ENCODE measurements at regions of chr7 and their contacts with region 1.

Region 1: GRCh38 chr7:143345428-143345900 is 17.0 kb downstream of the FAM131B start:
- DNase-seq: peak; percentile 82
- ATAC-seq: peak; percentile 100
- H3K4me3 Mint-ChIP-seq: peak overlapping the region; percentile 65
- H3K27ac Mint-ChIP-seq: no peak overlapping the region
- H3K4me1 Mint-ChIP-seq: peaks cover 7% of the 10 kb centered on the region
- H3K27me3 Mint-ChIP-seq: no peaks in the 10 kb centered on the region
- CTCF ChIP-seq: peak; percentile 67

Region 2: GRCh38 chr7:143299840-143300239 is 45.6 kb before region 1 on chr7:
- CTCF ChIA-PET with region 1: interaction called, 10 read pairs
- POLR2A ChIA-PET with region 1: no interaction called
- intact Hi-C with region 1: no loop called
- DNase-seq: peak; percentile 67
- ATAC-seq: peak; percentile 90
- H3K4me3 Mint-ChIP-seq: no peak overlapping the region
- H3K27ac Mint-ChIP-seq: no peak overlapping the region
- H3K4me1 Mint-ChIP-seq: peaks cover 51% of the 10 kb centered on the region
- H3K27me3 Mint-ChIP-seq: no peaks in the 10 kb centered on the region
- CTCF ChIP-seq: peak; percentile 52

Region 3: DNA sequence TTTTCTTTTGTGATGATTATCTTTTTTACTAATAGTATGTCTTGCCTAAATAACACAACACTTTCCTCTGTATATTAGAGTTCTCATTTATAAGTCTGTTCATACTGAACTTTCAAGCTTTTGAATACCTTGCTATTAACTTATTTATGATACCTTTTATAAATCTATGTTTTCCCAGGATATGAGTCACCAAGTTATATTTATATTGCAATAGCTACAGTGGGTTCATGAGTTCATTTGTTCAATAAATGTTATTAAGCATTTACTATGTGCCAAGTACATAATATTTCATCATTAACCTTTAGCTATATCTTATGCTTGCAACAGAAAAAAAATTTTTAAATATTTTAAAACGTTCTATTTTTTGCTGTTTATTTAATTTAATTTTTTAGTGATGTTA is 11.2 kb before region 1 on chr7:
- CTCF ChIA-PET with region 1: interaction called, 42 read pairs
- POLR2A ChIA-PET with region 1: no interaction called
- intact Hi-C with region 1: no loop called
- DNase-seq: no peak
- ATAC-seq: no peak
- H3K4me3 Mint-ChIP-seq: no peak overlapping the region
- H3K27ac Mint-ChIP-seq: no peak overlapping the region
- H3K4me1 Mint-ChIP-seq: no peaks in the 10 kb centered on the region
- H3K27me3 Mint-ChIP-seq: peaks cover 3% of the 10 kb centered on the region
- CTCF ChIP-seq: no peak

Region 4: GRCh38 chr7:143360788-143361551 is 15.5 kb after region 1 on chr7:
- CTCF ChIA-PET with region 1: interaction called, 10 read pairs
- POLR2A ChIA-PET with region 1: interaction called, 3 read pairs
- intact Hi-C with region 1: no loop called
- DNase-seq: no peak
- ATAC-seq: no peak
- H3K4me3 Mint-ChIP-seq: peak overlapping the region; percentile 44
- H3K27ac Mint-ChIP-seq: no peak overlapping the region
- H3K4me1 Mint-ChIP-seq: no peaks in the 10 kb centered on the region
- H3K27me3 Mint-ChIP-seq: peaks cover 20% of the 10 kb centered on the region
- CTCF ChIP-seq: no peak

Measured in activated CD8-positive, alpha-beta T cell treated with anti-CD3 and anti-CD28 coated beads for 36 hours (primary cell).